Activated CD4-positive, alpha-beta T cell treated with anti-CD3 and anti-CD28 coated beads, Interleukin-2, amount 10 ng/mL, durations not matched to agents 24 days and 14 days (primary cell): ENCODE measurements at regions of chr2 and their contacts with region 1.

Region 1: DNA sequence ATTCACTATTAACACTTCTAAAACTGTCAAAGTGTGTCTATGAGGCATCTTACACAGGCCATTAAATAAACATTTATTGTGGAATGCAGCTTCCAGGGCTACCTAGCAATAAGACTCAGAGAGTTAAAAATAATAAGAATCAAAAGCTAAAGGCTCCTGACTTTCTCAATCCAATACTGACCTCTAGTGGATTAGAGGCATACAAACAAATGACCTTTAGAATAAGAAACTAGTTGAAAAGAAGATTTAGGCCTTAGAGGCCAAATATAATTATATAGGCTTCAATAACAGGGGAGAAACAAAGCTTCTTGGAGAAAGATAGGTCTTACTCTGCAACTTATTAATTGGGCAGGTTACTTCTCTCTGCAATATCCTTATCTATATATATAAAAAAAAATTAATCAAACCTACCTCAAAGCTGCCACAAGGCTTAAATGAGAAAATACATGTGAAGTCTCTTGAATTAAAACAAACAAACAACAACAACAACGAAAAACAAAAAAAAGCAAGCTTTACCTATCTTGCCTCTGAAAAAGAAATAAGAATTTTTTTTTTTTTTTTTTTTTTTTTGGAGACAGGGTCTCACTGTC is 246.1 kb downstream of the EXOC6B start:
- DNase-seq: no peak
- H3K4me3 Mint-ChIP-seq: no peak overlapping the region
- H3K27ac Mint-ChIP-seq: no peak overlapping the region
- H3K4me1 Mint-ChIP-seq: no peaks in the 10 kb centered on the region
- H3K27me3 Mint-ChIP-seq: no peaks in the 10 kb centered on the region

Region 2: GRCh38 chr2:71545572-71546274 is 1034.0 kb before region 1 on chr2:
- intact Hi-C with region 1: loop called (anchors 5 kb)
- DNase-seq: peak; percentile 79
- H3K4me3 Mint-ChIP-seq: peak overlapping the region; percentile 45
- H3K27ac Mint-ChIP-seq: no peak overlapping the region
- H3K4me1 Mint-ChIP-seq: peaks cover 4% of the 10 kb centered on the region
- H3K27me3 Mint-ChIP-seq: peaks cover 2% of the 10 kb centered on the region

Region 3: DNA sequence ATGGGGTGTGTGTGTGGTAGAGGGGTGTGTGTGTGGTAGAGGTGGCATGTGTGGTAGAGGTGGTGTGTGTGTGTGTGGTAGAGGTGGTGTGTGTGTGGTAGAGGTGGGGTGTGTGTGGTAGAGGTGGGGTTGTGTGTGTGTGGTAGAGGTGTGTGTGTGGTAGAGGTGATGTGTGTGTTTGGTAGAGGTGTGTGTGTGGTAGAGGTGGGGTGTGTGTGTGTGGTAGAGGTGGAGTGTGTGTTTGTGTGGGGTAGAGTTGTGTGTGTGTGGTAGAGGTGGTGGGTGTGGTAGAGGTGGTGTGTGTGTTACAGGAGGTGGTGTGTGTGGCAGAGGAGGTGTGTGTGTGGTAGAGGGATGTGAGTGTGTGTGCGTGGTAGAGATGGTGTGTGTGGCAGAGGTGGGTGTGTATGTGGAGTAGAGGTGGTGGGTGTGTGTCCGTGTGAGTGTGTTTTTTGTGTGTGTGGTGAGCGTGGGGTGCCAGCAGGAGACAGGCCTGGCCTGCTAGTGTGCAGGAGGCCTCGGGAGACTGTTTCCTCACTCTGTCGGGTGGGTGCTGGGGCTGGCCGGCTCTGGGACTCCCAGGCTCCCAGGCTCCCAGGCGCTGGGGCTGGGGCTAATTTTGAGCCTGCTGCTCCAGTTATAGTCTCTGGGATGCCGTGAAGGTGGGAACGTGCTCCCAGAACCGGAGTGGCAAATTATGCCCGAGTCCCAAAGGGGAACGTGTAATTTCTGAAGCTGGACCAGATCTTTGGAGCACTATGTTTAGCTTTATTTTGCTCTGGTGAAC is 961.2 kb before region 1 on chr2:
- intact Hi-C with region 1: no loop called
- DNase-seq: no peak
- H3K4me3 Mint-ChIP-seq: no peak overlapping the region
- H3K27ac Mint-ChIP-seq: no peak overlapping the region
- H3K4me1 Mint-ChIP-seq: no peaks in the 10 kb centered on the region
- H3K27me3 Mint-ChIP-seq: no peaks in the 10 kb centered on the region

Region 4: GRCh38 chr2:71923887-71924533 is 655.7 kb before region 1 on chr2:
- intact Hi-C with region 1: loop called (anchors 1 kb)
- DNase-seq: peak; percentile 84
- H3K4me3 Mint-ChIP-seq: no peak overlapping the region
- H3K27ac Mint-ChIP-seq: no peak overlapping the region
- H3K4me1 Mint-ChIP-seq: no peaks in the 10 kb centered on the region
- H3K27me3 Mint-ChIP-seq: no peaks in the 10 kb centered on the region

Region 5: DNA sequence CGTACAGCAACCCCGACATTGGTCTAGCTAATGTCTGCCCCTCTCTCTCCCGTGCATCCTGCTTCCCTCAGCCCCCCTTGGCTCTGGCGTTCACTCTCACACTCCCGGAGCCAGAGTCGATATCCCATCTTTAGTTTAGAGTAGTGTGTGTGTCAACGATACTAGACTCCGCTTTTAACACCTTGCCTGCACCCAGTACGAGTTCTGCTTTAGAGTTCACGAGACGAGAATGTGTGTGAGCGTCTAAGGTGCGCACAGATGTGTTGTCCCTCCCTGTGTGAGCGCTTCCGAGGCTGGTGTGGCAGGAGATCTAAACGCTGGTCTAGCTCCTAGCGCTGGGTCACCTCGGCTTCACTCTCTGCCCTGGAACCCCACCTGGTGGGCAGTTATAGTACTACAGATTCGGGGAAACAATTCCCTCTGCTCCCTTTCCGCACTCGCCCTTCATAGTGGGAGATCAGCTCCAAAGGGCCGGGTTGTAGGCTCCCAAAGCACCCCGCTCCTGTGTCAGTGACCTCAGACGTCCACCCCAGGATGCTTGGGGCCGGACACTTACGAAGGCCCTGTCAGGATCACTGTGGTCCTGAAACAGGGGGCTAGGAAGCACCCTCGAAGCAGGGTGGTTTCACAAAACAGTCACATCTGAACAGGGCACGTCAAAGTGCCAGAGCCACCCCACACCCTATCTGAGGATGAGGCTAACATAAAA is 429.4 kb before region 1 on chr2:
- intact Hi-C with region 1: loop called (anchors 2 kb)
- DNase-seq: peak; percentile 89
- H3K4me3 Mint-ChIP-seq: peak overlapping the region; percentile 69
- H3K27ac Mint-ChIP-seq: peak overlapping the region; percentile 63
- H3K4me1 Mint-ChIP-seq: peaks cover 21% of the 10 kb centered on the region
- H3K27me3 Mint-ChIP-seq: peaks cover 48% of the 10 kb centered on the region

Region 6: DNA sequence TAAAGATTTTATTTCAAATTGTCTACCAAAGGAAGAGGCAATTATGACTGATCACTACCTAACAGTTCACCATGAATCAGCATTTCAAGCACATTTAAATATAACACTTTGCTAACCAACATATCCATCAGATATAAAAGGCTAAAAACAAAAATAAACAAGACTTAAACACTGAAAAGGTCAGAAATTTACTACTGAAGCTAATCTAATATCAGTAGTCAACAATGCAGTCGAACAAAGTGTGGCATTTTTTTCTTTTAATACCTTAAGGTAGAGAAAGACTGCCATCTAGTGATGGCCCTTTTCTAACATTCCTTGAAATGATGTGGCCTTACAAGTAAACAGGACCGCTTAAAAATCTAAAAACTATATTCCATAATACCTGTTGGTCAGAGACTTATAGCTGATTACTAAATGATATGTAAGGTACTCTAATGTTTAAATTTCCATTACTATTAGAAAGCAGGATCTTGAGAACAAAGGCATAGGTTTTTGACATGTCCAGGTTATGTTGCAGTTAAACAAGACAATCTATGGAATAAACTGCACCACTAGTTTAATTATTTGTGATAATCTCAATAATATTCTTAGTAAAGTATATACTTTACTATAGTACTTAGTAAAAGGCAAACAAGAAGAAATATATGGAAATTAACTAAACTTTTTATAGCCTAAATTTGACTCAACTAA is 166.1 kb after region 1 on chr2:
- intact Hi-C with region 1: loop called (anchors 10 kb)
- DNase-seq: peak; percentile 58
- H3K4me3 Mint-ChIP-seq: no peak overlapping the region
- H3K27ac Mint-ChIP-seq: no peak overlapping the region
- H3K4me1 Mint-ChIP-seq: no peaks in the 10 kb centered on the region
- H3K27me3 Mint-ChIP-seq: no peaks in the 10 kb centered on the region